ENCODE measurements at regions of chr18 and their contacts with region 1.

Region 1: GRCh38 chr18:36078751-36079529 is 11.6 kb upstream of the RPRD1A start:
- DNase-seq: no peak
- CTCF ChIP-seq: no peak

Region 2: DNA sequence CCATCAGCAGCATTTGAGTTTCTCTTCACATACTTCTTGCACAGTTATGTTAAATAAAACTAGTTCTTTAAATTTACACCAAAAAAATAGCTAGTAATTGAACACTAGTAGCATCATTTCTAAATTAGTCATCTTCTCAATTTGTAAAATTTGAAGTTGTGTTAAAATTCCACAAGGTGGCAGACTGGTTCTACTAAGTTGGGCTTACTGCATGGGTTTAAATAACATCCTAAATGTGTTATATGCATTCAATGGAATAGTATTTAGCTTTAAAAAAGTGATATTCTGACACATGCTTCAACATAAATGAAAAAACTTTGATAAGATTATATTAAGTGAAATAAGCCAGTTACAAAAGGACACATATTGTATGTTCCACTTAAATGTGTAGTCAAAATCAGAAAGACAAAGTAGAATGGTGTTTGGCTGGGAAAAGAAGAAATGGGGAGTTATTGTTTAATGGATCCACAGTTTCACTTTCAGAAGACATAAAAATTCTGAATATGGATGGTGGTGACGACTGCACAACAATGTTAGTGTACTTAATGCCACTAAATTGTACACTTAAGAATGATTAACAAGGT is 17.1 kb after region 1 on chr18:
- CTCF ChIA-PET with region 1: interaction called, 11 read pairs
- POLR2A ChIA-PET with region 1: no interaction called
- DNase-seq: peak; percentile 42
- CTCF ChIP-seq: peak; percentile 34

Measured in GM10248 (cell line).